ENCODE measurements at regions of chr6 and their contacts with region 1.

Region 1: GRCh38 chr6:5003604-5004372 is at the start of gene RPP40:
- DNase-seq: peak; percentile 97 to 98
- ATAC-seq: peak; percentile 94 to 99 (median 95)
- H3K4me3 ChIP-seq: peak within 1 kb of the TSS; percentile 73
- H3K4me3 Mint-ChIP-seq: peak within 1 kb of the TSS; percentile 92
- H3K27ac ChIP-seq: peak within 1 kb of the TSS; percentile 74
- H3K27ac Mint-ChIP-seq: peak within 1 kb of the TSS; percentile 86 to 92
- H3K4me1 ChIP-seq: peaks cover 12% of the 10 kb centered on the region
- H3K4me1 Mint-ChIP-seq: peaks cover 14 to 16% of the 10 kb centered on the region in 2 donors
- H3K27me3 ChIP-seq: no peaks in the 10 kb centered on the region
- H3K27me3 Mint-ChIP-seq: no peaks in the 10 kb centered on the region
- CTCF ChIP-seq: peak; percentile 88
- total RNA-seq, gene RPP40: 1.3 to 1.7 (median 1.3) TPM

Region 2: GRCh38 chr6:5260661-5261544 is 257.1 kb after region 1 on chr6 and contains the starts of genes FARS2 and LYRM4:
- intact Hi-C with region 1: loop called (anchors 2 kb)
- DNase-seq: peak; percentile 95
- ATAC-seq: peak; percentile 81 to 95 (median 84)
- H3K4me3 ChIP-seq: peak within 1 kb of the TSS; percentile 76
- H3K4me3 Mint-ChIP-seq: peak within 1 kb of the TSS; percentile 98
- H3K27ac ChIP-seq: peak within 1 kb of the TSS; percentile 86
- H3K27ac Mint-ChIP-seq: peak within 1 kb of the TSS; percentile 99 to 100
- H3K4me1 ChIP-seq: peaks cover 14% of the 10 kb centered on the region
- H3K4me1 Mint-ChIP-seq: peaks cover 19 to 22% of the 10 kb centered on the region in 2 donors
- H3K27me3 ChIP-seq: no peaks in the 10 kb centered on the region
- H3K27me3 Mint-ChIP-seq: no peaks in the 10 kb centered on the region
- CTCF ChIP-seq: peak; percentile 63
- total RNA-seq, gene FARS2: 15.3 to 24.8 (median 22.7) TPM
- total RNA-seq, gene LYRM4: 9.1 to 11.4 (median 11.1) TPM